T-cell (primary cell): ENCODE measurements at regions of chr4 and their contacts with region 1.

Region 1: DNA sequence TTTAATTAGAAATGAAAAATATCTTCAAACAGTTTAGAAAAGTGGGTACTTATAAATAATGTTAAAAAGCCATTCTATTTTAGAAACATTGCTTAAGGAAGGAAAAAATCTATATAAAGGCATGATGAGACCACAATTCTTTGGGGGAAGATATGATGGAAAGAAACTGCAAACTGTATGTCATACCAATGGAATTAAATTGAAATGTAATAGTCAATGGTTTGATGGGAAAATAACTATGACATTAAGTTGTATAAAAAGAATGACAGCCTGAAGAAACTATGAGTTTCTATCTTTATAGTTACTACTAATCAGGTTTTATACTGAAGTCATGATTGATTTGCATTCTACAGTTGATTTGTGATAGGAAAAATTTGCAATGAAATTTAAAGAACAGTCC is 40.3 kb upstream of the CAMK2D start:
- DNase-seq: no peak
- ATAC-seq: no peak
- H3K4me3 ChIP-seq: no peak overlapping the region
- H3K4me3 Mint-ChIP-seq: no peak overlapping the region
- H3K27ac ChIP-seq: no peak overlapping the region
- H3K27ac Mint-ChIP-seq: no peak overlapping the region
- H3K4me1 ChIP-seq: no peaks in the 10 kb centered on the region
- H3K4me1 Mint-ChIP-seq: no peaks in the 10 kb centered on the region
- H3K27me3 ChIP-seq: no peaks in the 10 kb centered on the region
- H3K27me3 Mint-ChIP-seq: no peaks in the 10 kb centered on the region

Region 2: GRCh38 chr4:113375964-113376666 is 425.8 kb before region 1 on chr4:
- CTCF ChIA-PET with region 1: interaction called in 1 of 2 experiments, 11 read pairs
- POLR2A ChIA-PET with region 1: no interaction called
- DNase-seq: no peak
- ATAC-seq: no peak
- H3K4me3 ChIP-seq: no peak overlapping the region
- H3K4me3 Mint-ChIP-seq: no peak overlapping the region
- H3K27ac ChIP-seq: no peak overlapping the region
- H3K27ac Mint-ChIP-seq: no peak overlapping the region
- H3K4me1 ChIP-seq: no peaks in the 10 kb centered on the region
- H3K4me1 Mint-ChIP-seq: no peaks in the 10 kb centered on the region
- H3K27me3 ChIP-seq: no peaks in the 10 kb centered on the region
- H3K27me3 Mint-ChIP-seq: peaks cover 2 to 3% of the 10 kb centered on the region in 2 donors

Region 3: DNA sequence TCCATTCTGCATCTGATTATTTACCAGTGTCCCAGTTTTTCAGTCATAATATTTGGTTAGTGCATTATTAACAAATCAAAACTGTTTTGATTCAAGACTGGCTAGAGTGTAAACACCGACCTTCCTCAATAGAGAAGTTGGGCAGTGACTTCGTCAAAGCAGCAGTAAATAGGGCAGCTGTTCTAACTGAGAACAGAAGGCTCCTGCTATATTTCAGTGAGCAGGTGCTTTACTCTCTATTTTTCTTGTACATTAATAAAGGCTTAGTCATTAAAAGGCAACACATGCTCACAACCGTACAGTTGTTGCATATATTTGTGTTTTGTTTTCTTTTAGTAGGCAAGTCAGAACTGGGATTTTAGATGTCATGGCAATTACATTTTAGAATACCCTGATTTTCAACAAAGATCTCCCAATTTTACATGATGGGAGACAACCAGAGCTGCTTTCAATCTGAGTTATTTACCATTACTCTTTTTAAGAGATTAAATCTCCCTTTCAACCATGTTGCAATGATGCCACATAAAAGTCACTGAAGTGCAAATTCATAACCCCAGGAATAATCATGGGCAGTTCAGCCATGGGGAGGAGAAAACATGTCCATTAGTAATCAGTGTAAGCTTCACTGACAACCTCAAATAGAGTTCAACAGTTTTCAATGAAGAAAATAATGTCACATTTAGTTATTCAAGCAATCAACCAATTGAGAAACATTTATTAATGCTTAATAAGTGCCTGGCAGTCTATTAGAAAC is 1078.2 kb after region 1 on chr4:
- CTCF ChIA-PET with region 1: no interaction called
- POLR2A ChIA-PET with region 1: no interaction called
- DNase-seq: no peak
- ATAC-seq: no peak
- H3K4me3 ChIP-seq: no peak overlapping the region
- H3K4me3 Mint-ChIP-seq: no peak overlapping the region
- H3K27ac ChIP-seq: no peak overlapping the region
- H3K27ac Mint-ChIP-seq: no peak overlapping the region
- H3K4me1 ChIP-seq: no peaks in the 10 kb centered on the region
- H3K4me1 Mint-ChIP-seq: no peaks in the 10 kb centered on the region
- H3K27me3 ChIP-seq: no peaks in the 10 kb centered on the region
- H3K27me3 Mint-ChIP-seq: no peaks in the 10 kb centered on the region